ENCODE measurements at regions of chr20 and their contacts with region 1.

Region 1: DNA sequence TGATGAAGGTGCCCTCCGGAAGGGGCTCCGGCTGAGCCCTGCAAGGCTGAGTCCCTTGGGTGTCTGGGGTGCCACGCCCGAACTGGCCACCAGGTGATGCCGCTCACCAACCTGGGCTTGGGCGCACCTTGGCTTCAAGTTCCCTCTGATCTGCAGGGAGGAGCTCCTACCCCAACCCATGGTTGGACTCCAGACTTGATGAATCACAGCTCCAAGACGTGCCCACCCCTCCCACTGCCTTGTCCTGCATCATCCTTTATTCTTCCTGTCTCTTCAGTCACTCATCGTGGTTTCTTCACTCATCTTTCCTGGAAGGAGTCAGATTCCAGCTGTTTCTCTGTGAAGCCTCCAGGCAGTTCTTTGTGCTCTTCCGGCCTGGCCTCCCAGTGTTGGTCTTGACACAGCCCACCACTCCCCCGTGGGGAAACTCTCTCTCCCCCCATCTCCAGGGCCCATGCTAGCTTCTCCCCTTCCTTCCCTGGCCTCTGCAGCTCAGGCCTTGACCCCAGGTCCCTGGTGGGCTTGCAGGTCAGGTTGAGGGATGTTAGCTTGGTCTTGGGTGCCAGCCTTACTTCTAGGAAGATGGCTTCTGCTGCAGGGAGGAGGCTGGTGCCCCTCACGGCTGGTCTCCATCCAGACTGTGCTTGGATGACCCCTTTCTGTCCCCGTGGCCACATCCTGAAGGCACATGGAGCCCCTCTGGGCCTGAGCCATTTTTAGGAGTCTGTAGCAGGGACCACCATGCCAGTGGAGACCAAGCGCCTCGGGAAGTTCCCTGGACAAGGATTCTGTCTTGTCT is 2.6 kb upstream of the ZBP1 start:
- DNase-seq: peak; percentile 85
- H3K4me3 Mint-ChIP-seq: no peak overlapping the region
- H3K27ac Mint-ChIP-seq: peak overlapping the region; percentile 53
- H3K4me1 Mint-ChIP-seq: peaks cover 64% of the 10 kb centered on the region
- H3K27me3 Mint-ChIP-seq: peaks cover 2% of the 10 kb centered on the region

Region 2: GRCh38 chr20:57398231-57398821 is 224.5 kb before region 1 on chr20:
- CTCF ChIA-PET with region 1: no interaction called
- POLR2A ChIA-PET with region 1: interaction called, 4 read pairs
- intact Hi-C with region 1: loop called (anchors 1 kb)
- DNase-seq: peak; percentile 93
- H3K4me3 Mint-ChIP-seq: peak overlapping the region; percentile 78
- H3K27ac Mint-ChIP-seq: peak overlapping the region; percentile 96
- H3K4me1 Mint-ChIP-seq: peaks cover 88% of the 10 kb centered on the region
- H3K27me3 Mint-ChIP-seq: no peaks in the 10 kb centered on the region

Region 3: DNA sequence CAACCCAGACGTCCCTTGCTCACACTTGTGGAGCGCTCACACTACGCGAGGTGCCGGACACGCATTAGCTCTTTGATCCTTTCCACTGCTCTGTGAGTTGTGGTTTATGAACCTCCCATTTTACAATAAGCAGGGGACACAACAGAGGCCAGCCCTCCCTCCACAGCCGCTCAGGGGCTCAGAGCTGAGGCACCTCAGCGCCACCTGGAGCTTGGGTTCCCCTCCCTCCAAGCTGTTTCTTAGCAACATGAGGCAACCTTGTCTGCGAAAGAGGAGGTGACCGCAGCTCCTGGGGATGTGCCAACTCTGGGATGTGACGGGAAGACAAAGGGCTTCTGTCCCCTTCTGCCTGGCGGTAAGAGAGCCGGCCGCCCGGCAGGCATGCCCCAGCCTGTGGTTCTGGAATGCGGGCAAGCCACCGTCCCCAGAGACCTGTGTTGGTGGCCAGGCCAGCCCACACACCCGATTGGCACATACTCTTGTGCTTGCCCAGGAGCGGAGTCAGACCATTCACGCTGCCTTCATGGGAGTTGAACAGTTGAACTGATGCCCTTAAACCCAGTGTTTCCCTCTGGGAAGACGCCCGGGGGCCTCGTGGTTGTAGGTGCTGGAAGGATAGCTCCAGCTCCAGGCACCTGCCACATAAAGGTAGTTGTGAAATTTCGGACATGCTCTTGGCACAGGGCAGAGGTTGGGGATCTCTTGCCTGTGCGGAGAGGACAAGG is 187.1 kb before region 1 on chr20:
- CTCF ChIA-PET with region 1: no interaction called
- POLR2A ChIA-PET with region 1: no interaction called
- intact Hi-C with region 1: no loop called
- DNase-seq: peak; percentile 43
- H3K4me3 Mint-ChIP-seq: no peak overlapping the region
- H3K27ac Mint-ChIP-seq: no peak overlapping the region
- H3K4me1 Mint-ChIP-seq: peaks cover 49% of the 10 kb centered on the region
- H3K27me3 Mint-ChIP-seq: no peaks in the 10 kb centered on the region

Region 4: GRCh38 chr20:57605045-57605444 is 17.7 kb before region 1 on chr20:
- CTCF ChIA-PET with region 1: interaction called, 6 read pairs
- POLR2A ChIA-PET with region 1: interaction called, 3 read pairs
- intact Hi-C with region 1: loop called (anchors 2 kb)
- DNase-seq: no peak
- H3K4me3 Mint-ChIP-seq: no peak overlapping the region
- H3K27ac Mint-ChIP-seq: peak overlapping the region; percentile 50
- H3K4me1 Mint-ChIP-seq: peaks cover 21% of the 10 kb centered on the region
- H3K27me3 Mint-ChIP-seq: no peaks in the 10 kb centered on the region

Region 5: DNA sequence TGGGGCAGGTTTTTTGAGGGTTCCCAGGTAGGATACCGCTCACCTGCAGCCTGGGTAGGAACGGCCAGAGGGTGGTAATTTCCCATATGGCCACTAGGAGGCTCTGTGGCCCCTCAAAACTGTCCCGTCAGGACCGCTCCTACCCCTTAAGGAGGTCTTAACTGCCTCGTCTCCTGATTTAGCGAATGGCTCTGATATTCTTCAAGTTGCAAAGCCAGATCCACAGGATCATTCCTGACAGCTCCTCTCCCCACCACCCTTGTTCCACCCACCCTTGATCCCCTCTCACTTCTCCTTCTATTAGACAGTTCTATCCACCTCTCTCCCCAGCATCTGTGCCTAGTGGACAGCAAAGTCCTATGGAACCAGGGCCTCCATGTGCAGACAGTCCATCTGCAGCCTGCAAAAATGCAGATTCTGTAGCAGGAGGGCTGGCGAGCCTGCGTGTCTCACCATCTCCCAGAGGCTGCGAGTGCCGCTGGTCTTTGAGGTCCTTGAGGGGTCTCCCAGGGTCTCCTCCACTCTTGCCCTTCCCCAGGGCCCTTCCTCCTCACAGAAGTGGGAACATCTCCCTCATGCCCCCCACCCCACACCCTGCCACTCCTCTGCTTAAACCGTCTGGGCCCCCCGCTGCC is 31.7 kb after region 1 on chr20:
- CTCF ChIA-PET with region 1: interaction called, 21 read pairs
- POLR2A ChIA-PET with region 1: no interaction called
- intact Hi-C with region 1: no loop called
- DNase-seq: peak; percentile 66
- H3K4me3 Mint-ChIP-seq: no peak overlapping the region
- H3K27ac Mint-ChIP-seq: no peak overlapping the region
- H3K4me1 Mint-ChIP-seq: peaks cover 11% of the 10 kb centered on the region
- H3K27me3 Mint-ChIP-seq: no peaks in the 10 kb centered on the region

Region 6: GRCh38 chr20:57709931-57710799 is 87.4 kb after region 1 on chr20 and contains the start of gene PMEPA1:
- CTCF ChIA-PET with region 1: interaction called, 4 read pairs
- POLR2A ChIA-PET with region 1: interaction called, 7 read pairs
- intact Hi-C with region 1: loop called (anchors 2 kb)
- DNase-seq: peak; percentile 93
- H3K4me3 Mint-ChIP-seq: peak within 1 kb of the TSS; percentile 78
- H3K27ac Mint-ChIP-seq: peak within 1 kb of the TSS; percentile 69
- H3K4me1 Mint-ChIP-seq: peaks cover 21% of the 10 kb centered on the region
- H3K27me3 Mint-ChIP-seq: peaks cover 6% of the 10 kb centered on the region
- total RNA-seq, gene PMEPA1: 2.5 to 3.0 TPM

Region 7: GRCh38 chr20:58407966-58408557 is 785.3 kb after region 1 on chr20:
- CTCF ChIA-PET with region 1: no interaction called
- POLR2A ChIA-PET with region 1: no interaction called
- intact Hi-C with region 1: loop called (anchors 5 kb)
- DNase-seq: peak; percentile 37
- H3K4me3 Mint-ChIP-seq: peak overlapping the region; percentile 12
- H3K27ac Mint-ChIP-seq: peak overlapping the region; percentile 79
- H3K4me1 Mint-ChIP-seq: peaks cover 36% of the 10 kb centered on the region
- H3K27me3 Mint-ChIP-seq: no peaks in the 10 kb centered on the region

Measured in activated CD4-positive, alpha-beta memory T cell treated with anti-CD3 and anti-CD28 coated beads for 36 hours (primary cell).